ENCODE measurements at regions of chr6 and their contacts with region 1.

Region 1: DNA sequence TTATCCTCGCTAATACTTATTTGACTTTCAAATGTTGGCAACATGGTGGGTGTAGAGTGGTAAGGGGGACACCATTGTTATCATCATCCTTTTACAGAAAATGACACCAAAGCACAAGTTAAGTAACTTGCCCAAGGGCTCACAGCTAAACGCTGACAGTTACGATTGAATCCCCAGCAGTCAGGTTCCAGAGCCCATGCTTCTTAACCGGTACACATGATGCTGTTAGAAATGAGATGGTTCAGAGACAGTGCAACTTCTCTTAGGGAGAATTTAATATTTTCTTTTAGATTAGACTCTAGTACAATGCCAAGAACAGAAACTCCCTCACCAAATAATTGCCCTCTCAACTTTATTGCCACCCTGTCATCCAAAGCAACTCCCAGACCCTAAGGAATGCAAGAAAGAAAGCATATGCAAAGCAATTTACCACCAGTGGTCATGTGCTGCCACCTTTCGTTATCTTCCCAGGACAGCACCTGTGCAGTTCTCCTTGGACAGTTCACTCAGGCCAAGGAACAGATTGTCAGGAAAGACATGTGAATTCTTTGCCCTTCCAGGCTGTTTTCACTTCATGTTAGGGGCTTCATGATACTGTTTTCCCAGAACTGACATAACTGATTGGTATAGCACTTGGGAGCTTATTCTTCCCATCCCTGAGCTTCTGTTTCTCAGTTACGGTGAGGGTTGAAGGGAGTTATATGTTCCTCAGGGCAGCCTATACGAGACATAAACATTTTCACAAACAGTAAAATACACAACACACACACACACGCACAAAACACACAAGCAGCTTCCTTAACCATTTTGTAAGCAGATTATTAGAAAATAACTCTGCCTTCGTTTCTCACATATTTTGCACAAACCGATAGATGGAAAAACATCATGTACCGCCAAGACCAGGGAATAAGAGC is 5.1 kb downstream of the HLA-DMA start:
- DNase-seq: no peak
- H3K4me3 Mint-ChIP-seq: no peak overlapping the region
- H3K27ac Mint-ChIP-seq: no peak overlapping the region
- H3K4me1 Mint-ChIP-seq: peaks cover 53% of the 10 kb centered on the region
- H3K27me3 Mint-ChIP-seq: no peaks in the 10 kb centered on the region

Region 2: DNA sequence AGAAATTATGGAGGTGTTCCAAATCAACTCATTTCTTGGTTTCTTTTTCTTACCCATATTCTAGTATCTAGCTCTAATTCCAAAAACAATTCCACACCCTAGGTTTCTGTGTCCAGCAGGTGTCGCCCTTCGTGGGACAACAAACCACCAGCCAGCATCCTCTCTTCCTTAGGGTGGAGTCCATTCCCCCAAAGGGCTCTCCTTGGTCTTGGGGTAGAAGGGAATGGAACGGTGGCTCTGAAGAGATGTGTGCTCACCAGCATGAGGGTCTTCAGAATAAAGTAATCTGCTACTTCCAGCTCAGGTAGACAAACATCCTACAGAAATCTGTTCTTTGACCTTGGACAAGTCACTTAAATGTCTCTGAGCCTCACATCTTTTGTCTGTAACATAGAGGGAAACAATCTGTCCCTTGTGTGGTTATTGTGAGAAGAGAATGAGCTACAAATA is 14.1 kb before region 1 on chr6:
- intact Hi-C with region 1: loop called (anchors 2 kb)
- DNase-seq: peak; percentile 63
- H3K4me3 Mint-ChIP-seq: no peak overlapping the region
- H3K27ac Mint-ChIP-seq: no peak overlapping the region
- H3K4me1 Mint-ChIP-seq: peaks cover 10% of the 10 kb centered on the region
- H3K27me3 Mint-ChIP-seq: peaks cover 15% of the 10 kb centered on the region

Measured in activated T-helper 2 cell treated with anti-CD3 and anti-CD28 coated beads, Interferon-gamma antibody, Interleukin-2, Interleukin-4, amounts not matched to agents 10 μg/mL and 5 μg/mL and 100 μg/mL, durations not matched to agents 14 hours and 24 hours and 36 hours (primary cell).